PC-3 (cell line): ENCODE measurements at regions of chr10 and their contacts with region 1.

Region 1: DNA sequence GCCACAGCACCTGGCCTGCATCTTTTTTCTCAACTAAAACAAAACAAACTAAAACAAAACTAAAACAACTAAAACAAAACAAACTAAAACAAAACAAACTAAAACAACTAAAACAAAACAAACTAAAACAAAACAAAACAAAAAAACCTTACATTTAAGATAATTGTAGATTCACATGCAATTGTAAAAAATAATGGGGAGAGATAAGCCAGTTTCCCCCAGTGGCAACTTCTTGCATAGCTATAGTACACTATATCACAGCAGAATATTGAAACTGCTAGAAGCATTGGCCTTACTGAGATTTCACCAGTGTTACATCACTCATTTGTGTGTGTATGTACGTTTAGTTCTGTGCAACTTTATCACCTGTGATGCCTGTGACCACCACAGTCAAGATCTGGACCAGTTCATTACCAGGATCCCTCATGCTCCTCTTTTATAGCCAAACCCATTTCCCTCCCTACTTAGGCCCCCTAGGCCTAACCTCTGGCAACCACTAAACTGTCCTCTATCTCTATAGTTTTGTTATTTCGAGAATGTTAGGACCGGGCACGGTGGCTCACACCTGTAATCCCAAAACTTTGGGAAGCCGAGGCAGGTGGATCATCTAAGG is 9.3 kb downstream of the FXYD4 start:
- DNase-seq: peak; percentile 43
- ATAC-seq: peak; percentile 62
- H3K4me3 ChIP-seq: no peak overlapping the region
- H3K27ac ChIP-seq: no peak overlapping the region
- H3K4me1 ChIP-seq: no peaks in the 10 kb centered on the region
- H3K27me3 ChIP-seq: no peaks in the 10 kb centered on the region
- CTCF ChIP-seq: peak; percentile 43; the same call in 1 of the 2 replicates

Region 2: DNA sequence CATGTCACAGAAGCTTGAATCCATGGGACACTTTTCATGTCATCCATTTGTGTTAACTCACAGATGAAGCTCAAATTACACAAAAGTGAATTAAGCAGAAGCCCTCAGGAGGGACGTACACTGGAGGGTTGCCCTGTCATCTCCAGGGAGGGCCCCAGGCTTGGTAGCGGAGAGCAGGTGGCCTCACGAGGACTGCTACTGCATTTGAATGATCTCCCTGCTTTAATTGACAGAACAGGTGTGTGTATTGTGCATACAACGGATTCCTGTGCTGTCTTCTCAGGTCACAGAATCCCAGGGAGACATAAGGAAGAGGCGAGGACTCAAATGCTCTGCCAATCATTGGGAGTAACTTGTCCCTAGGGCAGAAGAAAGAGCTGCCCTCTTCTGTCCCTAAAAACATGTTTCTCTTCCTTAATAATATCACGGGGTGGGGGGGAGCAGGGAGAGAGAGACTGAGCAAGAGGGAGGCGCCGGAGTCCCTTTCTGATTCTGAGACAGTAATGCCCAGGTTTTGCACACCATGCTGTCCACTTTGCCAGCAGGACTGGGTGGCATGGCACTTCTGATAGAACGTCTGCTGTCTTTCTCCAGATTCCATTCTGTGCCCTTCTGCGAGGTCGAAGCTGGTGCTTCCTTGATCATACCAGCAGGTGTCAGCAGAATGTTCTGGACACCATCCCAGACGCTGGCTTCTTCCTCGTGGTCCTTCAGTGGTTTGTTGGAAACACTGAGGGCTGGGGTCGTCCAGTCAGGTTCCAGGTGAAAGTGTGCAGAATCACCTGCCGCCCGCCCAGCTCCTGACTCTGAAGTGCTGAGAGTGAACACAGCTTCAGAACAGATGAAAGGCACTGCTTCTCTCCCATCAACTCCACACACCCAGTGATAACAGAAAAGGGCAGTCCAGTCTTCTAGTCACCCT is 87.7 kb before region 1 on chr10:
- CTCF ChIA-PET with region 1: interaction called, 10 read pairs
- POLR2A ChIA-PET with region 1: interaction called, 3 read pairs
- intact Hi-C with region 1: no loop called
- DNase-seq: peak; percentile 78
- ATAC-seq: peak; percentile 92
- H3K4me3 ChIP-seq: no peak overlapping the region
- H3K27ac ChIP-seq: no peak overlapping the region
- H3K4me1 ChIP-seq: peaks cover 10% of the 10 kb centered on the region
- H3K27me3 ChIP-seq: peaks cover 8% of the 10 kb centered on the region
- CTCF ChIP-seq: peak; percentile 93

Region 3: DNA sequence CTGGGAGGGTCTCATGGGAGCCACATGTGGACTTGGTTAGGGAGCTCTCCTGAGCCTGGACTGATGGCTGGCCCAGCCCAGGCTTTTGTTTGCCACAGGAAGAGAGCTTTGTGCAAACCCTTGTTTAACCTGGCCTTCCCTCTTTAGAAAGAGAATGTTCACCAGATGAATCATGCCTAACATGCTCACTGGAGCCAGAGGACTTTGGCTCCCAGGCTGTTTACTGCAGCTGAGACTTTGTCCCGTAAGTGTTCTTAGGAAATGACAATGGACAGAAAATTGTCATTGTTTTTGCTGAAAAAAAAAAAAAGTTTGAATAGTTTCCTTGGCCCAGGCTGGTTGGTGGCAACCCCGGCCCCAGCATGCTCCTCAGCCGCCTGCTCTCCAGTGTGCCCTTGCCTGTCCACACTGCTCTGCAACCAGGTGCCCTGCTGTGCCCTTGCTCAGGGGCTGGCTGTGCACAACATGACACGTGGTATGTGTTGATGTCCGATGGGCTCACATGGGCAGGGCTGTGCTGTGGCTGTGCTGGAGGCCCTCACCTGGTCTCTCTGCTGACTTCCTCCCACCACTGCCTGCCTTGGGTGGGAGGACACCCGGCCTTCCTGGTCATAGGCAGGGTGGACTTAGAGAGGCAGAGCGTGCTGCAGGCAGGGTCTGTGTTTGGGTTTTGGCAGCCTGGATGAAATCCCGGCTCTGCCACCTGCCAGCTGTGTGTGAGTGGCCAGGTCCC is 483.3 kb after region 1 on chr10:
- CTCF ChIA-PET with region 1: no interaction called
- POLR2A ChIA-PET with region 1: no interaction called
- intact Hi-C with region 1: no loop called
- DNase-seq: peak; percentile 77
- ATAC-seq: peak; percentile 75
- H3K4me3 ChIP-seq: no peak overlapping the region
- H3K27ac ChIP-seq: peak overlapping the region; percentile 60
- H3K4me1 ChIP-seq: peaks cover 27% of the 10 kb centered on the region
- H3K27me3 ChIP-seq: 0 out of 2 replicates have a peak, but pooled peaks cover 4% of the 10 kb centered on the region
- CTCF ChIP-seq: no peak